ENCODE measurements at regions of chr12 and their contacts with region 1.

Region 1: DNA sequence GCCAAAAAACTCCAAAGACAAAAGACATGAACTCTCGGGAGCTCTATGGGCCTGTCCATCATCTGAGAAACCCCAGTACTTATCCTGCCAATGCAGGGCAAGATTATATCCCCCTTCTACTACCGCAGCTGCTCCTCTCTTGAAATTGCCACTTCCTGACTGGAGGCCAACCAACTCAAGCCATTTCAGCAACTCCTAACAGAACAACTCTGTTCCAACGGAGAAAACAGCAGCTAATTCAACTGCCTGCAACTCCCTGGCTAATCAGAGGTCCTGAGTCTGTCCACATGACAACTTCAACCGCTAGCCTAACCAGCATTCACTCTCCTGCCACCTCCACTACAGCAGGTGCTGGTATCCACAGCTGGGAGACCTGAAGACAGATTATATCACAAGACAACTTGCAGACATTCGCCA is 24.1 kb downstream of the CEP83 start:
- DNase-seq: no peak
- H3K4me3 ChIP-seq: no peak overlapping the region
- H3K4me3 Mint-ChIP-seq: no peak overlapping the region
- H3K27ac Mint-ChIP-seq: peak overlapping the region; percentile 9
- H3K4me1 ChIP-seq: peaks cover 34% of the 10 kb centered on the region
- H3K4me1 Mint-ChIP-seq: peaks cover 27% of the 10 kb centered on the region
- H3K27me3 ChIP-seq: no peaks in the 10 kb centered on the region
- H3K27me3 Mint-ChIP-seq: no peaks in the 10 kb centered on the region
- CTCF ChIP-seq: no peak

Region 2: DNA sequence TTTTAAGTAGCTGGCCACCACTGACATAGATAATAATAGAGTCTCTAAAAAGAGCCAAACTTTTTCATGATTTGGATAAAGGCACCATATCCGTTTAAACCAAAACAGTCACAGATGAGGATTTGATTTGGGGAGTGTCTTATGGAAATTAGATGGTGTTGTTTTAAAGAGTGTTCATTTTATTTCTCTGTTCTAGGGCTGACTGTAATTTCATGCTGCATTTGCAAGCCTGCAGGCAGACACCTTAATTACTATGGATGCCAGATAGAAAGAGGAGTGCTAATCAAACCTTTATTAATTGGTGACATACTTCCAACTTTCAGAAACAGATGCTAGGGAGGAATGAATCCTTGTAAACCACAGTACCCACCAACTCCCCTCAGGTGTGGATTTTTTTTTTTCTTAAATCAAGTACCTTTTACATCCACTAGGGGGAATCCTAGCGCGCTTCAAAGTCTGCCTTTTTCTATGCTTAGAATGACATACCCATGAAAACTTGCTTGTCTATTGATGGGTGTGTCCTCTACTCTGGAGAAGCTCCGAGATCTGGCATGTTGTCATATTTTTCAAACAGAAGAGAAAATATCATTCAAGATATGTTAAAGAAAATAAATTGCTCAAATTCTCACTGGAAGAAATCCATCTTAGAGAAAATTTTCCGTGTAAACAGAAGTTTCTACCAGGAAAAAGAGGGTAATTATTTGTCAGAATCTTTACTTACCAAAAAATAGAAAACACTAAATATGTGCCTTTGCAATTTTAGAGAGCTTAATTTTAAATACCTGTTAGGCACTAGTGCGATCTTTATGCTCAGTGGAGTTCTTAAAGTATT is 301.3 kb before region 1 on chr12:
- CTCF ChIA-PET with region 1: interaction called, 3 read pairs
- POLR2A ChIA-PET with region 1: no interaction called
- intact Hi-C with region 1: loop called (anchors 1 kb)
- DNase-seq: peak in 1 of 2 experiments; percentile 56
- H3K4me3 ChIP-seq: no peak overlapping the region
- H3K4me3 Mint-ChIP-seq: no peak overlapping the region
- H3K27ac Mint-ChIP-seq: no peak overlapping the region
- H3K4me1 ChIP-seq: peaks cover 7% of the 10 kb centered on the region; the same call in 1 of the 2 replicates
- H3K4me1 Mint-ChIP-seq: no peaks in the 10 kb centered on the region
- H3K27me3 ChIP-seq: no peaks in the 10 kb centered on the region
- H3K27me3 Mint-ChIP-seq: peaks cover 4% of the 10 kb centered on the region
- CTCF ChIP-seq: peak; percentile 67 to 70

Region 3: DNA sequence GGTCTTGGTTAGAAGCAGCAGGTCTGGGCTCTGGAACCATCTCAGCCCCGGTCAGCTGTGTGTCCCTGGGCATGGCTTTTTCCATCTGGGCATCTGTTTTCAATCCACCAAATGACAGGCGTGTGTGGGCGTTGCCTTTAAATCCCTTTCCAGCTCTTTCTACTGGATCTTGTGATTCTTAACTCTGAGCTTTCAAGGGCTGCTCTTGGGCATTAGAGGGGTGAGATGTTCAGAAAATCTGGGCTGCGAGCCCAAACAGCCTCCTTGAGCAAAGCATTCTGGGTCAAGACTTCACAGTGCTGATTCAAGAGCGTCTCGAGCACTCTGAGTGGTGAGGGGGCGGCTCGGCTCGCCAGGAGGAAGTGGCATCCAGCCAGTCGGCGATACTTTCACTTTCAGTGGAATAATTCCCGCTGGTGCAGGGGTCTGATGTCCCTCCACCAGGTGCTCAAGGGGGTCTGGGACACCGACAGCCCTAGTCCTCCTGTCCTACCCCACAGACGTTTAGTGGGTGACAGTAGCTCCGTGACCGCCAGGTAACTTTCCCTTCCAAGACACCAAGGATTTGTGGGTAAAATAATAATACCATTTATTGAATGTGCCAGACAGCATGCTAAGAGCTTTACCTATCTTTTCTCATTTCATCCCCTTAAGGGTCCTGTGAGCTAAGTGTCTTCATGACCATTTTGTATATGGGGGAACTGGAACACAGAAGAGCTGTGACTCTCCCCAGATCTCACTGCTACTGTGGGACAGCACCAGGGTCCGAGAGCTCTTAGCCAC is 173.1 kb before region 1 on chr12:
- CTCF ChIA-PET with region 1: no interaction called
- POLR2A ChIA-PET with region 1: no interaction called
- intact Hi-C with region 1: no loop called
- DNase-seq: no peak
- H3K4me3 ChIP-seq: no peak overlapping the region
- H3K4me3 Mint-ChIP-seq: no peak overlapping the region
- H3K27ac Mint-ChIP-seq: no peak overlapping the region
- H3K4me1 ChIP-seq: peaks cover 14% of the 10 kb centered on the region
- H3K4me1 Mint-ChIP-seq: peaks cover 7% of the 10 kb centered on the region
- H3K27me3 ChIP-seq: no peaks in the 10 kb centered on the region
- H3K27me3 Mint-ChIP-seq: no peaks in the 10 kb centered on the region
- CTCF ChIP-seq: no peak

Region 4: DNA sequence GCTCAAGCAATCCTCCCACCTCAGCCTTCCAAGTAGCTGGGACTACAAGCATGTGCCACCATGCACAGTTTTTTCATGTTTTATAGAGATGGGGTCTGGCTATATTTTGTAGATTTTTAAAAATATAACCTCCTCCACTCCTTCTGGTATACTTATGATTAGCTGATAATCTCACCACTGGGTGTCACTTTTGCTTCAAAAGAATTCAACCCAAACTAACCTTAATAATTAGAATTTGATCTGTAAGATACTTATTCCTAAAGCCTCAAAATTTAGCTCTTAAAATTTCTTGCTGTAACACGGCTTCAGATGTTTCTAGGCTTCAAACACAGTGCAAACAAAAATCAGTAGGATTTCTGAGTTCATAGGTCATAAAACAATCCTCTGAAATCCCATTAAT is 106.2 kb before region 1 on chr12:
- CTCF ChIA-PET with region 1: interaction called, 3 read pairs
- POLR2A ChIA-PET with region 1: no interaction called
- intact Hi-C with region 1: loop called (anchors 1 kb)
- DNase-seq: no peak
- H3K4me3 ChIP-seq: no peak overlapping the region
- H3K4me3 Mint-ChIP-seq: no peak overlapping the region
- H3K27ac Mint-ChIP-seq: no peak overlapping the region
- H3K4me1 ChIP-seq: no peaks in the 10 kb centered on the region
- H3K4me1 Mint-ChIP-seq: no peaks in the 10 kb centered on the region
- H3K27me3 ChIP-seq: no peaks in the 10 kb centered on the region
- H3K27me3 Mint-ChIP-seq: no peaks in the 10 kb centered on the region
- CTCF ChIP-seq: peak in 1 of 2 experiments; percentile 11

Region 5: DNA sequence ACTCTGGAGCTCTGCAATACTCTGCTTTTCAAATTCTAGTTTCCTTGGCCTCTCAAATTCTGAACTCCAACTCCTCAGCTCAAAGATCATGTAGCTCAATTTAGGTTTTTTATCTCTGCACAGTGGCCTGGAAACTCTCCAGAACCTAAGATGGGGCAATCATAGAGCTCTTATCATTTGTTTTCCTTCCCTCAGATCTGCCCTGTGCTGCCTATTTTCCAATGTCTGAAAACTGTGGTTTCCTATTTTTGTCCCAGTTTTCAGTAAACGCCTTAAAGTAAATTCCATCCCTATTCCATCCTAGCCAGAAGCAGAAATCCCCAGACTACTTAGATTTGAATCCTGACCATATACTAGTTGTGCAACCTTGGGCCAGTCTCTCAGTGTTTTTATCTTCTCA is 49.1 kb before region 1 on chr12:
- CTCF ChIA-PET with region 1: no interaction called
- POLR2A ChIA-PET with region 1: no interaction called
- intact Hi-C with region 1: no loop called
- DNase-seq: no peak
- H3K4me3 ChIP-seq: no peak overlapping the region
- H3K4me3 Mint-ChIP-seq: no peak overlapping the region
- H3K27ac Mint-ChIP-seq: no peak overlapping the region
- H3K4me1 ChIP-seq: no peaks in the 10 kb centered on the region
- H3K4me1 Mint-ChIP-seq: no peaks in the 10 kb centered on the region
- H3K27me3 ChIP-seq: no peaks in the 10 kb centered on the region
- H3K27me3 Mint-ChIP-seq: no peaks in the 10 kb centered on the region
- CTCF ChIP-seq: no peak

Region 6: DNA sequence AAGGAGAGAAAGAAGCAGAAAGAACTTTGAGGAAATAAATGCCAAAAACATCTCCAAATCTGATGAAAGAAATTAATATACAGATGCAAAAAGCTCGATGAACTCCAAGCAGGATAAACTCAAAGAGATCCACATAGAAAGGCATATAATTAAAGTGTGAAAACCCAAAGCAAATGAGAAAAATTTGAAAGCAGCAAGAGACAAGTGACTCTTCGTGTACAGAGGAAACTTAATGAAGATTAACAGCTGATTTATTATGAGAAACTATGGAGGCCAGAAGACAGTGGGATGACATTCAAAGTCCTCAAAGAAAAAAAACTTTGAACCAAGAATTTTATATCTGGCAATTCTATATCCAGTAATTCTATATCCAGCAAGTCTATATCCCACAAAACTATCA is 377.8 kb after region 1 on chr12:
- CTCF ChIA-PET with region 1: no interaction called
- POLR2A ChIA-PET with region 1: no interaction called
- intact Hi-C with region 1: no loop called
- DNase-seq: no peak
- H3K4me3 ChIP-seq: no peak overlapping the region
- H3K4me3 Mint-ChIP-seq: no peak overlapping the region
- H3K27ac Mint-ChIP-seq: no peak overlapping the region
- H3K4me1 ChIP-seq: no peaks in the 10 kb centered on the region
- H3K4me1 Mint-ChIP-seq: no peaks in the 10 kb centered on the region
- H3K27me3 ChIP-seq: no peaks in the 10 kb centered on the region
- H3K27me3 Mint-ChIP-seq: no peaks in the 10 kb centered on the region
- CTCF ChIP-seq: no peak

Measured in Caco-2 (cell line).